HCT116 (cell line): ENCODE measurements at regions of chr14 and their contacts with region 1.

Region 1: GRCh38 chr14:59576332-59577294 is at the start of gene CCDC175:
- DNase-seq: peak; percentile 60
- ATAC-seq: peak; percentile 99
- H3K4me3 ChIP-seq: peak within 1 kb of the TSS; percentile 43 to 52
- H3K27ac ChIP-seq: no peak within 1 kb of the TSS; the same call in 1 of the 2 replicates
- H3K4me1 ChIP-seq: peaks cover 0 to 7% of the 10 kb centered on the region in 2 experiments; a peak in 1 of 4 replicates
- H3K27me3 ChIP-seq: no peaks in the 10 kb centered on the region
- CTCF ChIP-seq: peak; percentile 84 to 87 (median 86)
- POLR2A ChIP-seq: no peak
- RAD21 ChIP-seq: peak; percentile 81
- total RNA-seq, gene CCDC175: not detected

Region 2: GRCh38 chr14:59028476-59029202 is 548.0 kb before region 1 on chr14:
- CTCF ChIA-PET with region 1: no interaction called
- POLR2A ChIA-PET with region 1: no interaction called
- RAD21 ChIA-PET with region 1: no interaction called
- intact Hi-C with region 1: loop called (anchors 5 kb)
- DNase-seq: peak; percentile 68
- ATAC-seq: peak; percentile 98
- H3K4me3 ChIP-seq: peak overlapping the region in 1 of 2 experiments; percentile 14; a peak in 1 of 4 replicates
- H3K27ac ChIP-seq: no peak overlapping the region
- H3K4me1 ChIP-seq: peaks cover 0 to 9% of the 10 kb centered on the region in 2 experiments; a peak in 2 of 4 replicates
- H3K27me3 ChIP-seq: no peaks in the 10 kb centered on the region
- CTCF ChIP-seq: peak; percentile 80 to 93 (median 90)
- POLR2A ChIP-seq: no peak
- RAD21 ChIP-seq: peak; percentile 91

Region 3: DNA sequence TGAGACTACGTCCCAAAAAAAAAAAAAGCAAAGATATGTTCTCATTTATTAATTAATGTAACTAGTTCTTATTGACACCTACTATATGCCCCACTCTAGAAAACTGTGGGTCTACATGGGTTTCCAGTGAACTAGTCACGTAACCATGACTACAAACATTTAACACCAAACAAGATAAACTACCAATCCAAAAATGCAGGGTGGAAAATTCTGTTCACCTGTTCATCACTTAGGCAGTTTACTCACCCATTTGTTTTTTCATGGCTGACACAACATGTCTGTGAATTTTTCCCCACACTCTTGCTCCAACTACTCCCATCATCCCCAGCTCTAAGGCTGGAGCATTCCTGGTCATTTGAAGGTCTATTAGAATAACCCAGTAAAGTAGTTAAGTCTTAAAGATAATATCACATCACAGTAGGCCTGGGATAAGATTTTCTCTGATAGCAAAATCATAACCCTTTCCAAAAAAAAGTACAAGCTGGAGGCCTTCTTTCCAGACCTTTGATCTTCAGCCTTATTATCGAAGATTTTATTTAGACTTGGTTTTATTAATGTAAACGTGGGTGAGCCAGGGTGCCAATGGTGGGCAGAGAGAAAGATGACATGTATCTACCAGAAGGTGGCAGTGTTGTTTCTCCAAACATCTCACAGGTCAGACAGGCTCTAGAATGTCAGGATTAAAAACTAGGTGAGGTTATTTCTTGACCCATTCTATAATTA is 449.7 kb before region 1 on chr14:
- CTCF ChIA-PET with region 1: interaction called, 5 read pairs
- POLR2A ChIA-PET with region 1: no interaction called
- RAD21 ChIA-PET with region 1: no interaction called
- intact Hi-C with region 1: loop called (anchors 2 kb)
- DNase-seq: peak; percentile 61
- ATAC-seq: peak; percentile 97
- H3K4me3 ChIP-seq: no peak overlapping the region
- H3K27ac ChIP-seq: no peak overlapping the region
- H3K4me1 ChIP-seq: no peaks in the 10 kb centered on the region
- H3K27me3 ChIP-seq: no peaks in the 10 kb centered on the region
- CTCF ChIP-seq: peak; percentile 61 to 86 (median 86)
- POLR2A ChIP-seq: no peak
- RAD21 ChIP-seq: peak; percentile 93

Region 4: DNA sequence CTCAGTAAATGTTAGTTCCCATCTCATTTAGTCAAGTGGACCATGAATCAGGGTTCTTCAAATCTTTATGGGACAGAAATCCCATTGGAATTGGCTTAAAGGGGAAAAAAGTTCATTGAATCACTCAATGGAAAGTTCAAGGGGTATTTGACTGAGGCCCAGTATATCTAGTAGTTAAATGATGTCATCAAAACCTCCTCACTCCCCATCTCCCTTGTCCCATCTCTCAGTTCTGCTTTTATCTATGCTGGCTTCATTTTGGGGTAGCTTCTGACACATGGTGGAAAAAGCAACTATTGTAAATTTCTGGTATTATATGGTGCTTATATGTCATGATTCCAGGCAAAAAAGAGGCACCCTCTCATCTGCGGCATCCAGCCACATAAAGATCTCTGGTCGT is 336.3 kb before region 1 on chr14:
- CTCF ChIA-PET with region 1: no interaction called
- POLR2A ChIA-PET with region 1: no interaction called
- RAD21 ChIA-PET with region 1: no interaction called
- intact Hi-C with region 1: no loop called
- DNase-seq: no peak
- ATAC-seq: no peak
- H3K4me3 ChIP-seq: no peak overlapping the region
- H3K27ac ChIP-seq: no peak overlapping the region
- H3K4me1 ChIP-seq: no peaks in the 10 kb centered on the region; a peak in 1 of 4 replicates
- H3K27me3 ChIP-seq: no peaks in the 10 kb centered on the region
- CTCF ChIP-seq: no peak
- POLR2A ChIP-seq: no peak
- RAD21 ChIP-seq: no peak

Region 5: GRCh38 chr14:59483900-59484638 is 92.5 kb before region 1 on chr14 and contains the starts of genes JKAMP and L3HYPDH:
- CTCF ChIA-PET with region 1: interaction called, 16 read pairs
- POLR2A ChIA-PET with region 1: no interaction called
- RAD21 ChIA-PET with region 1: interaction called, 3 read pairs
- intact Hi-C with region 1: no loop called
- DNase-seq: peak; percentile 90
- ATAC-seq: peak; percentile 88
- H3K4me3 ChIP-seq: peak within 1 kb of the TSS; percentile 81 to 93
- H3K27ac ChIP-seq: peak within 1 kb of the TSS; percentile 87
- H3K4me1 ChIP-seq: peaks cover 13 to 33% of the 10 kb centered on the region in 2 experiments
- H3K27me3 ChIP-seq: no peaks in the 10 kb centered on the region
- CTCF ChIP-seq: peak; percentile 35 to 54 (median 47); a peak in 5 of 6 replicates
- POLR2A ChIP-seq: peak; percentile 43
- RAD21 ChIP-seq: no peak
- total RNA-seq, gene JKAMP: 46.5 TPM
- total RNA-seq, gene L3HYPDH: 19.5 TPM

Region 6: DNA sequence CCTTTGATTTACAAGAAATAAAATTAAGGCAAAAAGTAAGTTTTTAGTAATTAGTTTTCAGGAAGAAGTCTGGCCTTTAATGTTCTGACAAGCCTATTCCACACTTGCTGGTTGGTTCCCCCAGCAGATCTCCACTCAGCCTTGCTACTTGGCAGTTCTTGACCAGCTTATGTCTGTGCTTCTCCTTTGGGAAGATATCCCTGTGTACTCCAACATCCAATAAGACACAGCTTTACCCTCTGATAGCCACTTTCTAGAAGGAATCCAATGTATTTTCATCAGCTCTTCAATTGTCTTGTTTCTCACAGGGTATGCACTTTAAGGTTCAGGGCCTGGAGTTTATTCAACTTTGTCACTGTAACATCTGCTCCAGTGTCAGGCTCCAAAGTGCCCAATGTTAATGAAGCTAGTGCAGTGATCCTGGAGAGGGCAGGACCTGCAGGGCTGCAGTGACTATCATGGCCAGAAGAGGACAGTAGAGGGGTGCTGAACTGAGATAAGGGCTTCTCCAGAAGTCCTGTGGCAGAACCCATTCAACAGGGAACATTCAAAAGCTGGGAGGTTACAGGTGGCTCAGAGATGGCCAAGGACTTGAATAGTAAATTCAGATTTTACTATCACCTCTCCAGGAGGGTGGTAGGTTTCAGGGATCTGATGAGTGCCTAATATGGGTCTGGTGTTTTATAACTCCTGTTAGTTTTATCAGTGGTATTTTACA is 69.4 kb before region 1 on chr14:
- CTCF ChIA-PET with region 1: interaction called, 27 read pairs
- POLR2A ChIA-PET with region 1: interaction called, 3 read pairs
- RAD21 ChIA-PET with region 1: interaction called, 4 to 6 read pairs
- intact Hi-C with region 1: loop called (anchors 1 kb)
- DNase-seq: peak; percentile 42
- ATAC-seq: peak; percentile 96
- H3K4me3 ChIP-seq: no peak overlapping the region
- H3K27ac ChIP-seq: no peak overlapping the region
- H3K4me1 ChIP-seq: no peaks in the 10 kb centered on the region
- H3K27me3 ChIP-seq: no peaks in the 10 kb centered on the region
- CTCF ChIP-seq: peak; percentile 62 to 99 (median 94)
- POLR2A ChIP-seq: no peak
- RAD21 ChIP-seq: peak; percentile 61

Region 7: DNA sequence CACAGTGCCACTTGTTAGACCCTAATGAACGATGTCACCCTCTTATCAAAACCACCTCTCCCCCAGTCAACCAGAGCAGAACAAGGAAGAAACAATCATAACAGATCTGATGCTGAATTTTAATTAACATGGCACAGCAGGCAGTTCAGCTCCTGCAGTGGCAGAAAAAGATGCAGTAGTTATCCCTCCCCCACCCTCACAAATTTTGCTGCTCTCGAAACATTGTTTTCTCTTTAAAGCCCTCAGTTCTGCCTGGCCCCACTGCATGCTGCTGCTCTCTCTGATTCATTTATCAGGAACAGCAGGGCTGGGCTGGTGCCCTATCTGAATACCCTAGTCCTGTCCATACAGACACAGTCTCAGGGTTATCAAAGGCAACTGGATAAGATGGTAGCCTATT is 12.2 kb before region 1 on chr14:
- CTCF ChIA-PET with region 1: interaction called, 10 read pairs
- POLR2A ChIA-PET with region 1: interaction called, 3 read pairs
- RAD21 ChIA-PET with region 1: no interaction called
- intact Hi-C with region 1: no loop called
- DNase-seq: no peak
- ATAC-seq: no peak
- H3K4me3 ChIP-seq: no peak overlapping the region
- H3K27ac ChIP-seq: no peak overlapping the region
- H3K4me1 ChIP-seq: peaks cover 0 to 6% of the 10 kb centered on the region in 2 experiments; a peak in 1 of 4 replicates
- H3K27me3 ChIP-seq: no peaks in the 10 kb centered on the region
- CTCF ChIP-seq: no peak
- POLR2A ChIP-seq: no peak
- RAD21 ChIP-seq: no peak

Region 8: GRCh38 chr14:59823179-59823578 is 246.6 kb after region 1 on chr14:
- CTCF ChIA-PET with region 1: no interaction called
- POLR2A ChIA-PET with region 1: no interaction called
- RAD21 ChIA-PET with region 1: no interaction called
- intact Hi-C with region 1: no loop called
- DNase-seq: no peak
- ATAC-seq: no peak
- H3K4me3 ChIP-seq: no peak overlapping the region
- H3K27ac ChIP-seq: no peak overlapping the region
- H3K4me1 ChIP-seq: no peaks in the 10 kb centered on the region
- H3K27me3 ChIP-seq: no peaks in the 10 kb centered on the region
- CTCF ChIP-seq: no peak
- POLR2A ChIP-seq: no peak
- RAD21 ChIP-seq: no peak

Region 9: DNA sequence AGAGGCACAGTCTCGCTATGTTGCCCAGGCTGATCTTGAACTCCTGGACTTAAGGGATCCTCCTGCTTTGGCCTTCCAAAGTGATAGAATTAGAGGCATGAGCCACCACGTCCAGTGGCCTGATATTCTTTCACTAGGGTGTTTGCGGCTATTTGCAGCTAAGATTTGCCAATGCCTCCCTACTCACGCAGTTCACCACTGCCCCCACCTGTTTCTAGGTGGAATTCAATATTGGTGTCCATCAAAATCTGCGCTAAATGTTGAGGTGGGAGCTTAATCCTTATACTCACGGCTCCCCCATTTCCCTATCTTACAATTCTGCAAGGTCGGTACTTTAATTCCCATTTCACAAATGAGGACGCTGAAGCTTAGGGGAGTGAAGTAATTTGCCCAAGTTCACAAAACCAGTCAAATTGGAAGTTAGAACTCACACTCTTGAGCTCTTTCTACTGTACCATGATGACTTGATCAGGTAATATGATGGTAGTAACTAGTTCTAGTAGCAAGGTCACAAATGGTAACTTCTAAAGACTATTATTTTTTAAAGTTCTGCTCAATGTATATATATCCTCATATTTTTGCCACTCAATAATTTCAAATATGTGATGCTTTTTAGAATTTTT is 321.3 kb after region 1 on chr14:
- CTCF ChIA-PET with region 1: interaction called, 17 read pairs
- POLR2A ChIA-PET with region 1: no interaction called
- RAD21 ChIA-PET with region 1: no interaction called
- intact Hi-C with region 1: no loop called
- DNase-seq: peak; percentile 10
- ATAC-seq: peak; percentile 81
- H3K4me3 ChIP-seq: no peak overlapping the region
- H3K27ac ChIP-seq: no peak overlapping the region
- H3K4me1 ChIP-seq: no peaks in the 10 kb centered on the region
- H3K27me3 ChIP-seq: no peaks in the 10 kb centered on the region
- CTCF ChIP-seq: peak; percentile 44 to 57 (median 54); a peak in 5 of 6 replicates
- POLR2A ChIP-seq: no peak
- RAD21 ChIP-seq: peak; percentile 68

Region 10: GRCh38 chr14:60294411-60295069 is 717.9 kb after region 1 on chr14:
- CTCF ChIA-PET with region 1: no interaction called
- POLR2A ChIA-PET with region 1: no interaction called
- RAD21 ChIA-PET with region 1: no interaction called
- intact Hi-C with region 1: no loop called
- DNase-seq: no peak
- ATAC-seq: no peak
- H3K4me3 ChIP-seq: no peak overlapping the region
- H3K27ac ChIP-seq: no peak overlapping the region
- H3K4me1 ChIP-seq: no peaks in the 10 kb centered on the region
- H3K27me3 ChIP-seq: no peaks in the 10 kb centered on the region
- CTCF ChIP-seq: no peak
- POLR2A ChIP-seq: no peak
- RAD21 ChIP-seq: no peak